Caco-2 (cell line): ENCODE measurements at regions of chr3 and their contacts with region 1.

Region 1: GRCh38 chr3:158727206-158728060 is 4.8 kb downstream of the RARRES1 start:
- DNase-seq: peak; percentile 46 to 63
- H3K4me3 ChIP-seq: no peak overlapping the region
- H3K4me3 Mint-ChIP-seq: no peak overlapping the region
- H3K27ac Mint-ChIP-seq: no peak overlapping the region
- H3K4me1 ChIP-seq: 0 out of 2 replicates have a peak, but pooled peaks cover 3% of the 10 kb centered on the region
- H3K4me1 Mint-ChIP-seq: no peaks in the 10 kb centered on the region
- H3K27me3 ChIP-seq: no peaks in the 10 kb centered on the region
- H3K27me3 Mint-ChIP-seq: no peaks in the 10 kb centered on the region
- CTCF ChIP-seq: peak; percentile 70 to 72

Region 2: GRCh38 chr3:158659454-158660237 is 67.8 kb before region 1 on chr3:
- CTCF ChIA-PET with region 1: interaction called, 10 read pairs
- POLR2A ChIA-PET with region 1: no interaction called
- intact Hi-C with region 1: no loop called
- DNase-seq: peak; percentile 46 to 48
- H3K4me3 ChIP-seq: no peak overlapping the region
- H3K4me3 Mint-ChIP-seq: no peak overlapping the region
- H3K27ac Mint-ChIP-seq: no peak overlapping the region
- H3K4me1 ChIP-seq: no peaks in the 10 kb centered on the region
- H3K4me1 Mint-ChIP-seq: peaks cover 6% of the 10 kb centered on the region
- H3K27me3 ChIP-seq: no peaks in the 10 kb centered on the region
- H3K27me3 Mint-ChIP-seq: no peaks in the 10 kb centered on the region
- CTCF ChIP-seq: peak; percentile 50 to 59